Activated CD4-positive, alpha-beta T cell treated with anti-CD3 and anti-CD28 coated beads for 36 hours (primary cell): ENCODE measurements at regions of chr4 and their contacts with region 1.

Region 1: GRCh38 chr4:48906206-48907173 is at the start of gene OCIAD2:
- DNase-seq: peak; percentile 90
- ATAC-seq: peak; percentile 65
- H3K4me3 Mint-ChIP-seq: peak within 1 kb of the TSS; percentile 85
- H3K27ac Mint-ChIP-seq: peak within 1 kb of the TSS; percentile 93
- H3K4me1 Mint-ChIP-seq: peaks cover 48% of the 10 kb centered on the region
- H3K27me3 Mint-ChIP-seq: no peaks in the 10 kb centered on the region
- total RNA-seq, gene OCIAD2: 83.6 to 97.4 TPM

Region 2: GRCh38 chr4:47287745-47288144 is 1618.7 kb before region 1 on chr4:
- CTCF ChIA-PET with region 1: no interaction called
- POLR2A ChIA-PET with region 1: no interaction called
- intact Hi-C with region 1: no loop called
- DNase-seq: no peak
- ATAC-seq: no peak
- H3K4me3 Mint-ChIP-seq: no peak overlapping the region
- H3K27ac Mint-ChIP-seq: no peak overlapping the region
- H3K4me1 Mint-ChIP-seq: no peaks in the 10 kb centered on the region
- H3K27me3 Mint-ChIP-seq: peaks cover 8% of the 10 kb centered on the region

Region 3: GRCh38 chr4:48180234-48180633 is 726.3 kb before region 1 on chr4:
- CTCF ChIA-PET with region 1: no interaction called
- POLR2A ChIA-PET with region 1: no interaction called
- intact Hi-C with region 1: no loop called
- DNase-seq: no peak
- ATAC-seq: peak; percentile 51
- H3K4me3 Mint-ChIP-seq: no peak overlapping the region
- H3K27ac Mint-ChIP-seq: no peak overlapping the region
- H3K4me1 Mint-ChIP-seq: peaks cover 15% of the 10 kb centered on the region
- H3K27me3 Mint-ChIP-seq: no peaks in the 10 kb centered on the region

Region 4: GRCh38 chr4:48499551-48500066 is 406.9 kb before region 1 on chr4:
- CTCF ChIA-PET with region 1: no interaction called
- POLR2A ChIA-PET with region 1: no interaction called
- intact Hi-C with region 1: loop called in 1 of 2 experiments (anchors 5 kb)
- DNase-seq: no peak
- ATAC-seq: peak; percentile 73
- H3K4me3 Mint-ChIP-seq: no peak overlapping the region
- H3K27ac Mint-ChIP-seq: no peak overlapping the region
- H3K4me1 Mint-ChIP-seq: peaks cover 17% of the 10 kb centered on the region
- H3K27me3 Mint-ChIP-seq: no peaks in the 10 kb centered on the region

Region 5: DNA sequence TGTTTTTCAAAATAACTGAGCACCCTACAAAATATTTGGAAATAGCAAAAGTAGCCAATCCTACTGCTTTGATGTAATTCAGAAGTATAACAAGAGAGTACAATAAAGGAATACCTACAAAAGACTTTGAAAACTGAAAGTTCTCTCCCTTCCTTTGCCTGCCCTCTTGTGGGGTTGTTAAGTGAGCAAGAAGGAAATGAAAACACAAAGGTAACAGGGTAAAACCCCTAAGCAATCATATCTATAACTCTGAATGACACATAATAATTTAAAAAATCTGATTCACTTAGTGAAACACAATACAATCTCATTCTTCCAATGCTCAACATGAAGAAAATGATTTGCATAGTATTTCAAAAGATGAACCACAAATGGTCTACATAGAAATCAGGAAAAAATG is 224.6 kb before region 1 on chr4:
- CTCF ChIA-PET with region 1: no interaction called
- POLR2A ChIA-PET with region 1: no interaction called
- intact Hi-C with region 1: loop called (anchors 1 to 5 kb)
- DNase-seq: peak; percentile 23
- ATAC-seq: peak; percentile 98
- H3K4me3 Mint-ChIP-seq: no peak overlapping the region
- H3K27ac Mint-ChIP-seq: no peak overlapping the region
- H3K4me1 Mint-ChIP-seq: peaks cover 42% of the 10 kb centered on the region
- H3K27me3 Mint-ChIP-seq: no peaks in the 10 kb centered on the region

Region 6: GRCh38 chr4:48779998-48780742 is 126.3 kb before region 1 on chr4 and contains the start of gene FRYL:
- CTCF ChIA-PET with region 1: interaction called, 4 read pairs
- POLR2A ChIA-PET with region 1: interaction called, 5 read pairs
- intact Hi-C with region 1: loop called (anchors 1 kb)
- DNase-seq: peak; percentile 99
- ATAC-seq: peak; percentile 93
- H3K4me3 Mint-ChIP-seq: peak within 1 kb of the TSS; percentile 98
- H3K27ac Mint-ChIP-seq: peak within 1 kb of the TSS; percentile 98
- H3K4me1 Mint-ChIP-seq: peaks cover 42% of the 10 kb centered on the region
- H3K27me3 Mint-ChIP-seq: no peaks in the 10 kb centered on the region
- total RNA-seq, gene FRYL: 67.9 to 69.8 TPM

Region 7: GRCh38 chr4:48851651-48852050 is 54.8 kb before region 1 on chr4:
- CTCF ChIA-PET with region 1: interaction called, 4 read pairs
- POLR2A ChIA-PET with region 1: no interaction called
- intact Hi-C with region 1: loop called in 1 of 2 experiments (anchors 5 kb)
- DNase-seq: no peak
- ATAC-seq: peak; percentile 86
- H3K4me3 Mint-ChIP-seq: no peak overlapping the region
- H3K27ac Mint-ChIP-seq: peak overlapping the region; percentile 64
- H3K4me1 Mint-ChIP-seq: peaks cover 15% of the 10 kb centered on the region
- H3K27me3 Mint-ChIP-seq: no peaks in the 10 kb centered on the region

Region 8: GRCh38 chr4:48891028-48891619 is 15.4 kb before region 1 on chr4:
- CTCF ChIA-PET with region 1: no interaction called
- POLR2A ChIA-PET with region 1: no interaction called
- intact Hi-C with region 1: no loop called
- DNase-seq: no peak
- ATAC-seq: no peak
- H3K4me3 Mint-ChIP-seq: no peak overlapping the region
- H3K27ac Mint-ChIP-seq: no peak overlapping the region
- H3K4me1 Mint-ChIP-seq: peaks cover 3% of the 10 kb centered on the region
- H3K27me3 Mint-ChIP-seq: no peaks in the 10 kb centered on the region

Region 9: DNA sequence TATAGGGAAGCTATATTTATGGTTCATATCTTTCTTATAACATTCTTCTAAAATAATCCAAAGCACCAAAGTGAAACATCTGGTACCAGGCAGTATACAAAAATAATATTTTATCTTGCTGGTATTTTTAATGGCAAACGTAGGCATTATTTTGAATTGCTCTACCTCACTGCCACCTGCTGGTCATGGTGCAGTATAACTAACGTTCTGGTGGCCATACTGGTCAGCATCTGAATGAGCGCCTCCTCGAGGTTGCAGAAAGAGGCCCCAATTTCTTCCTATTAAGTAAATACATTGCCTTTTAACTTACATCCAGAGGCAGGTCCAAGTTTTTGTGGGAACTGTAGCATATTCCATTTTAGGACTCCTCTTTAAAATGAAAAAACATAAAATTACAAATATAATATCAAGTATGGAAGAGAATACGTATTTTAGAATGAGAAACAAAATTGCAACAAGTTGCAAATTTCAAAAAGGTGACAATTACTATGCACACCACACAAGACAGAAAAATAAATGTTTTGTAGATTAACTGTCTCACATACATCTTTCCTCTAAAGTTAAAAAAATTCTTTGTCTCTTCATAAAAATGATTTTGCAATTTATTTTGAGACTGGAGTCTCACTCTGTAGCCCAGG is 56.7 kb after region 1 on chr4:
- CTCF ChIA-PET with region 1: interaction called, 3 read pairs
- POLR2A ChIA-PET with region 1: no interaction called
- intact Hi-C with region 1: loop called in 1 of 2 experiments (anchors 2 kb)
- DNase-seq: peak; percentile 86
- ATAC-seq: peak; percentile 89
- H3K4me3 Mint-ChIP-seq: no peak overlapping the region
- H3K27ac Mint-ChIP-seq: no peak overlapping the region
- H3K4me1 Mint-ChIP-seq: no peaks in the 10 kb centered on the region
- H3K27me3 Mint-ChIP-seq: no peaks in the 10 kb centered on the region